Sigmoid colon (tissue), 7 donors: ENCODE measurements at regions of chr18 and their contacts with region 1.

Region 1: GRCh38 chr18:12236934-12237832 is 17.0 kb upstream of the CIDEA start:
- DNase-seq: peak; percentile 80
- H3K4me3 ChIP-seq: no peak overlapping the region
- H3K27ac ChIP-seq: no peak overlapping the region
- H3K4me1 ChIP-seq: peaks cover 0 to 5% (median 0%) of the 10 kb centered on the region in 4 donors
- H3K27me3 ChIP-seq: no peaks in the 10 kb centered on the region
- CTCF ChIP-seq: peak; percentile 39 to 86 (median 62)
- EP300 ChIP-seq: no peak
- POLR2A ChIP-seq: no peak

Region 2: GRCh38 chr18:11654736-11655605 is 582.2 kb before region 1 on chr18:
- intact Hi-C with region 1: loop called (anchors 5 kb)
- DNase-seq: no peak
- H3K4me3 ChIP-seq: no peak overlapping the region
- H3K27ac ChIP-seq: no peak overlapping the region
- H3K4me1 ChIP-seq: peaks cover 0 to 6% (median 0%) of the 10 kb centered on the region in 4 donors
- H3K27me3 ChIP-seq: peaks cover 0 to 5% (median 2%) of the 10 kb centered on the region in 3 donors
- CTCF ChIP-seq: peak in 3 of 4 experiments; percentile 44 to 65 (median 50)
- EP300 ChIP-seq: no peak
- POLR2A ChIP-seq: no peak

Region 3: GRCh38 chr18:11937874-11938478 is 299.2 kb before region 1 on chr18:
- intact Hi-C with region 1: loop called (anchors 10 kb)
- DNase-seq: peak; percentile 84
- H3K4me3 ChIP-seq: no peak overlapping the region
- H3K27ac ChIP-seq: peak overlapping the region in 1 of 4 donors; percentile 45
- H3K4me1 ChIP-seq: no peaks in the 10 kb centered on the region
- H3K27me3 ChIP-seq: no peaks in the 10 kb centered on the region
- CTCF ChIP-seq: peak; percentile 58 to 82 (median 71)
- EP300 ChIP-seq: no peak
- POLR2A ChIP-seq: no peak

Region 4: DNA sequence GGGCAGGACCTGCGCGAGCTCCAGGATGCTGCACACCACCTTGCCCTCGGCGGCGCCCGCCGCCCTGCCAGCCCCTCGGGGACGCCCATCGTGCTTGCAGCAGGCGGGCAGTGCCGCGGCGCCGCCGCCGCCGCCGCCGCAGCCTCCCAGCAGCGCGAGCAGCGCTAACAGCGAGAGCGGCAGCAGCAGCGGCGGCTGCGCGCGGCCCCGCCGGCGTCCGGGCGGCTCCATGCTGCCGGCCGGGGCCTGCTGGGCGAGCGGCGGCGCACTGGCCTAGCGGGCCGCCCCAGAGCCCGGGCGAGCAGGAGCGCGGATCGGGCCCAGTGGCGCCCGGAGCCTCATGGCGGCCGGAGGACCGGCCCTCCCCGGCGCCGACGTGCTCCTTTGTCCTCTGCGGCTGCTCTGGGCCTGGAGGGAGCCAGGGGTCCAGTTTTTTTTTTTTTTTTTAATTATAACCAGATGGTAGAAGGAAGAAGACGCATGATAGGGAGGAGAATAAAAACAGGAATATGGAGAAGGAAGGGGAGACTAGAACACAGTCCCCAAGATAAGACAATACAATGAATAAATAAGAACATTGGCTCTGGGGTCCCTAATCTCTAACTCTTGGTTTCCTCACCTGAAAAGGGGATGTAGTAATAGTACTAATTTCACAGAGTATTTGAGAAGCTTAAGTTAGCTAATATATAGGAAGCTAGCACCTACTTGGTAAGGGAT is 160.6 kb before region 1 on chr18:
- intact Hi-C with region 1: loop called (anchors 10 kb)
- DNase-seq: no peak
- H3K4me3 ChIP-seq: peak overlapping the region in 3 of 4 donors; percentile 21 to 39 (median 37)
- H3K27ac ChIP-seq: peak overlapping the region; percentile 35 to 72 (median 64)
- H3K4me1 ChIP-seq: no peaks in the 10 kb centered on the region
- H3K27me3 ChIP-seq: no peaks in the 10 kb centered on the region
- CTCF ChIP-seq: no peak
- EP300 ChIP-seq: no peak
- POLR2A ChIP-seq: no peak

Region 5: DNA sequence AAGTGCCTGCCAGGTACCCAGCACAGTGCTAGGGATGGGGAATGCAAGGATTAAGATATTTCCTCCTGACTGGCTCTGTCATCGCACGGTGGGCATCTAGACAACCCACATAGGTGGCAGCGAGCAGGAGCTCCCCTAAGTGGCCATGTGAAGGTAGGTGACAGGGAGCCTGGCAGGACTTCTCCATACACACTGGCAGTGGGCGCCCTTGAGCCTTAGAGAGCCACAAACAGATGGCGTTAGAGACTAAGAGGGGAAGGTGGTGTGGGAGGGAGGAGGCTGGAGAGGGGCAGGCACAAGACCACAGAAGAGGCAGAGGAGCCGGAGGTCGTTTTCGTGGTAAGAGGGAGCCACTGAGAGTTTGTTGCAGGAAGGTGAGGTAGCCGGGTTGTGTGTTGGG is 185.8 kb after region 1 on chr18:
- intact Hi-C with region 1: no loop called
- DNase-seq: no peak
- H3K4me3 ChIP-seq: no peak overlapping the region
- H3K27ac ChIP-seq: no peak overlapping the region
- H3K4me1 ChIP-seq: peaks cover 0 to 20% (median 13%) of the 10 kb centered on the region in 4 donors
- H3K27me3 ChIP-seq: no peaks in the 10 kb centered on the region
- CTCF ChIP-seq: no peak
- EP300 ChIP-seq: no peak
- POLR2A ChIP-seq: no peak